Prostate gland (tissue), 2 donors: ENCODE measurements at regions of chr5 and their contacts with region 1.

Region 1: GRCh38 chr5:57173185-57174127 is at the start of gene GPBP1:
- DNase-seq: peak; percentile 99
- H3K4me3 ChIP-seq: peak within 1 kb of the TSS; percentile 92 to 99
- H3K27ac ChIP-seq: peak within 1 kb of the TSS; percentile 100
- H3K4me1 ChIP-seq: no peaks in the 10 kb centered on the region
- H3K27me3 ChIP-seq: no peaks in the 10 kb centered on the region
- CTCF ChIP-seq: peak in 3 of 4 experiments; percentile 3 to 32 (median 10)
- POLR2A ChIP-seq: peak; percentile 95
- total RNA-seq, gene GPBP1: 63.4 to 84.6 TPM

Region 2: DNA sequence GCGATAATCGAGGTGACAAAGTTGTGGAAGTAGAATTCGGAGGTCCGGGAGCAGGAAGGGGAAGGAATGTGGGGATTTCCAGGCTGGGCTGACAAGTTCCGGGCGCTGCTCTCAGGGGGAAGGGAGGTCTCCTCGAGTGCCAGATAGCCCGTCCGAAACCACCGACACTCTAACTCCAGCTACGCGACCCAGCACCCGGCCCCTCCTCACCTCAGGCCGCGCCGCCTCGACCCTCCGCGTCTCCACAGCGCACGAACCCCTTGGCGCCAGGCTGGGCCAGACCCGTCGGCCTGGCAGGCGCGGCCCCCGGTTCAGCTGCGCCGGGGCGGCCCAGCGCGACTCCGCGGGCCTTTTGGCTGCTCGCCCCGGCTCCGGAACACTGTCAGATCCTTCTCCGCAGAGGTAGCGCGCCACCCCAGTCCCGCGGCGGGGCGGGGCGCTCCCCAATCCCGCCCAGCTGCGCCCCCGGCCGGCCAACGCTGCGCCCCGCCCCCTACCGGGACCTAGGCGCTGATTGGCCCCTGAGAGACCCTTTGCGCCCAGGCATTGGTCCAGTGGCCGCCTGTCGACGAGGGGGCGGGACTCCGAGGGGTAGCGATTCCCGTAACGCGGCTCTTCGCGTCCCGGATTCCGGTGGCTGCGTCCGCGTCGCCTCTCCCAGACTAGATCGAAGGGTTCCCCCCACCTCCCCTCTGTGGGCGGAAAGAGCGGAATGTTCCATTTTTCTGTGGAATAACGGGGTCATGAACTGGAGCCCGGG is 1178.7 kb before region 1 on chr5 and contains the start of gene IL6ST:
- intact Hi-C with region 1: loop called (anchors 10 kb)
- DNase-seq: peak; percentile 98
- H3K4me3 ChIP-seq: peak within 1 kb of the TSS; percentile 64 to 94
- H3K27ac ChIP-seq: peak within 1 kb of the TSS; percentile 98 to 99
- H3K4me1 ChIP-seq: peaks cover 6% of the 10 kb centered on the region
- H3K27me3 ChIP-seq: no peaks in the 10 kb centered on the region
- CTCF ChIP-seq: peak; percentile 36 to 75 (median 44)
- POLR2A ChIP-seq: peak; percentile 91
- total RNA-seq, gene IL6ST: 186 to 228 TPM

Region 3: DNA sequence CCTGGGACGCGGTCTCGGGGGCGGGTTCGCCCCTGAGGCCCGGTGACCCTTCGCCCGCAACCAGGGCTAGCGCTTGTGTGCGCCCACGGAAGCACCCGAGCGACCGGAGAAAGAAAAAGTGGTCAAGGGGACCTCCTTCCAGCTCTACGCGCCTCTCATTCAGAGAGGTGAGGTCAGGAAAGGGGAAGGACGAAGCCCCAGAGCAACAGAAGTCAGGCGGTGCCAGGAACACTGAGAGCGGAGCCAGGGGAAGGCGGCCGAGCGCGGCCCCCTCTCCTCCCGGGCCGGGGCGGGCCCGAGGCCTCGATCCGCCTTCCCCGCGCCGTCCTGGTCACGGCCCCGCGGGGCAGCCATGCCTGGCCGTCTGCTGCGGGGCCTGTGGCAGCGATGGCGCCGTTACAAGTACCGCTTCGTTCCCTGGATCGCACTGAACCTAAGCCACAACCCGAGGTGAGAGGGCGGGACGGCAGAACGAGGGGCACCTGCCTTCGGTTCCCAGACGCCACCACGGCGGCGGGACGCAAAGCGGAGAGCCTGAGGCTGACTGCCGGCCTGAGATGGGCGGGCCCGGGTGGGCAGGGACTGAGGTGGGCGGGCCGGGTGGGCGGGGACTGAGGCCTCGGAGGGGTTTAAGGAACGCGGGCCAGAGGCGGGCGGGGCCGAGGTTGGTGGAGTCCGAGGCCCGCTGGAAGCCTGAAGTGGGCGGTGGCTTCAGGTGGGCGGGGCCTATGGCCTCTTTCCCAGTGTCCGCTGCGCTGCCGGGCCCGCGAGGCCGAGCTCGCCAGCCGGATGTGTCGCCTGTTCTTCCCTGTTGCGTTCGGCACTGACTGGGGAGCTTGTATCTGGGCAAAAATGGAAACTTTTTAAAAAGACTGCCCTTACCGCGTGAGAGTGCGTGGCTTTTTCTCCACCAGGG is 263.9 kb before region 1 on chr5 and contains the start of gene SETD9:
- intact Hi-C with region 1: loop called (anchors 2 kb)
- DNase-seq: peak; percentile 98
- H3K4me3 ChIP-seq: peak within 1 kb of the TSS; percentile 45 to 56
- H3K27ac ChIP-seq: peak within 1 kb of the TSS; percentile 90 to 94
- H3K4me1 ChIP-seq: no peaks in the 10 kb centered on the region
- H3K27me3 ChIP-seq: no peaks in the 10 kb centered on the region
- CTCF ChIP-seq: no peak
- POLR2A ChIP-seq: peak; percentile 56
- total RNA-seq, gene SETD9: 10.7 to 20.3 TPM

Region 4: DNA sequence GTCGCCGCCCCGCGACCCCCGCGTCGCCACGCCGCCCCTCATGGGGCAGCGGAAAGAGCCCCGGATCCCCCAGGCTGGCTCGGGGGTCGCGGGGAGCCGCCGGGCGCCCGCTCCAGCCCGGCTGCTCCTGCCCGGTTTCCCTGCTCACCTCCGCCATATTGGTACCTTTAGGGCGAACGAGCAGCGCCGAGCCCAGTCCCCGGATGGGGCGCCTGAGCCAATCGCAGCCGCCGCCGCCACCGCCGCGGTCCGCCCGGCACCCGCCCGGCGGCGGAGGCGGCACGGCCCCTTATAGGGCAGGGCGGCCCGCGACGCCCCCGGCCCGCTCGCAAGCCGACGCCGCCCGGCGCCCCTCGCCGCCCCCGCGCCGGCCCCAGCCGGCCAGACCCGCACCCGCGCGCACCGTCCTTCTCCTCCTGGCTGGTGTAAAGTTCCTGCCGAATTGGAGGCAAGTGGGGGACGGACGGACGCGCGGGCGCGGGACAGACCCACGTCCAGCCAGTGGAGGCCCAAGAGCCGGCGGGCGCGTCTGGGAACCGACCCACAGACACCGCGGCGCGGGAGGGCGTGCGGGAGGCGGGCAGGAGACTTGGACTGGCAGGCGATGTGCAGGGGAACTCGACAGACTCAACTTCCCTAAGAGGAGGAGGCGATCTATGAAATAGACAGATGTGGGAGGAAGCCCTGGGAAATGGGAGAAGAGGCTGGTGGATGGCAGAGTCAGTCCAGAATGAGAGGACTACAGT is 221.3 kb before region 1 on chr5 and contains the start of gene MIER3:
- intact Hi-C with region 1: loop called (anchors 5 kb)
- DNase-seq: peak; percentile 69
- H3K4me3 ChIP-seq: peak within 1 kb of the TSS; percentile 78 to 83
- H3K27ac ChIP-seq: peak within 1 kb of the TSS; percentile 81 to 90
- H3K4me1 ChIP-seq: no peaks in the 10 kb centered on the region
- H3K27me3 ChIP-seq: no peaks in the 10 kb centered on the region
- CTCF ChIP-seq: no peak
- POLR2A ChIP-seq: peak; percentile 12
- total RNA-seq, gene MIER3: 35.8 to 40.6 TPM

Region 5: GRCh38 chr5:57349214-57349613 is 175.8 kb after region 1 on chr5:
- intact Hi-C with region 1: no loop called
- DNase-seq: no peak
- H3K4me3 ChIP-seq: no peak overlapping the region
- H3K27ac ChIP-seq: no peak overlapping the region
- H3K4me1 ChIP-seq: no peaks in the 10 kb centered on the region
- H3K27me3 ChIP-seq: no peaks in the 10 kb centered on the region
- CTCF ChIP-seq: no peak
- POLR2A ChIP-seq: no peak

Region 6: DNA sequence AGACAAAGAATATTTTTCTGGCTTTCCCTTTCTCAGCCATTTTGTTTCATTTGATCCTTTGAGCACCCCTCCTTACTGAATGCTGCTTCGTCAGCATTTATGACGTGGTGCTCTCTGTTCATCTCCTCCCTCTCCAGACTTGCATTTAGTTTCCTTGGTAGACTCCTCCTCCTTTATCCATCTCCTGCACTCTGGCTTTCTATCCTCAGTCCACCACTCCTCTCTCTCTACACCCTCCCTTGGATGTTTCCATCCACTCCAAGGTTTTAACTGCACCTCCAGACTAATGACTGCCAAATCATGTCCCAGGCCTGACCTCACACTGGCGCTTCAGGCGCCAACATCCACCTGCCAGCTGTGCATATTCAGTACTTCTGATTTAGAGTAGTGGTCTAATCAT is 1654.8 kb after region 1 on chr5:
- intact Hi-C with region 1: no loop called
- DNase-seq: no peak
- H3K4me3 ChIP-seq: no peak overlapping the region
- H3K27ac ChIP-seq: no peak overlapping the region
- H3K4me1 ChIP-seq: no peaks in the 10 kb centered on the region
- H3K27me3 ChIP-seq: no peaks in the 10 kb centered on the region
- CTCF ChIP-seq: no peak
- POLR2A ChIP-seq: no peak